Transverse colon (tissue), 4 donors: ENCODE measurements at regions of chr5 and their contacts with region 1.

Region 1: GRCh38 chr5:39015743-39016586 is 58.2 kb downstream of the RICTOR start:
- DNase-seq: no peak
- H3K4me3 ChIP-seq: no peak overlapping the region
- H3K27ac ChIP-seq: peak overlapping the region; percentile 49 to 73 (median 60)
- H3K4me1 ChIP-seq: peaks cover 7 to 36% (median 20%) of the 10 kb centered on the region in 4 donors
- H3K27me3 ChIP-seq: no peaks in the 10 kb centered on the region
- CTCF ChIP-seq: no peak
- EP300 ChIP-seq: no peak
- POLR2A ChIP-seq: no peak

Region 2: DNA sequence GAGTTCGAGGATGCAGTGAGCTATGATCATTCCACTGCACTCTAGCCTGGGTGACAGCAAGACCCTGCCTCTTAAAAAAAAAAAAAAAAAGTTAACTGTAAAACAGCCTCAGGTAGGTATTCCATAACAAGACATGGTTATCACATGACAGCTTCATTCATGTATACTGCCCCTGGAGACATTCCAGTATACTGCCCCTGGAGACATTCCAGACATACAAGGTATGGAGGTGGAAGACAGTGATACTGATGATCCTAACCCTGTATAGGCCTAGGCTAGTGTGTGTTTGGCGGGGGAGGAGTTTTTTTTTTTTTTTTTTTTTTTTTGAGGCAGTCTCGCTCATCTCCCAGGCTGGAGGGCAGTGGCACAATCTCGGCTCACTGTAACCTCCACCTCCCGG is 47.3 kb before region 1 on chr5:
- in situ Hi-C with region 1: no loop called
- intact Hi-C with region 1: no loop called
- DNase-seq: no peak
- H3K4me3 ChIP-seq: no peak overlapping the region
- H3K27ac ChIP-seq: no peak overlapping the region
- H3K4me1 ChIP-seq: no peaks in the 10 kb centered on the region
- H3K27me3 ChIP-seq: no peaks in the 10 kb centered on the region
- CTCF ChIP-seq: no peak
- EP300 ChIP-seq: no peak
- POLR2A ChIP-seq: no peak

Region 3: DNA sequence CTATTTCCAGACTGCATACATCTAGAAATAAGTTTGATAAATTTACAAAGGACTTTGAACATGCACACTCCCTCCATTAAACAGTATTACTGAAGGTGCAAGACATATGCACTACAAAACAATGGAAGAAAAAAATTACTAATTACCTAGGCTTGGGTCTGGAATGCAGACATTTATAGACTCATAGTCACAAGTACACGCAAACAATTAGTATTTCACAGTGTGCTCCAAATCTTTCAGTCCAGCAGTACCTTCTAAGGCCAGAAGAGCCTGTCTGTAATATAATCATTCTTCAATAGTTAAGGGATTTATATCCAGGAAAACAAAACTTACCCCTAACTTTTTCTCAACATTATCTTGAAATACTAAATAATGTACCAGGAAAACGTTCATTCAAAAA is 47.1 kb after region 1 on chr5:
- in situ Hi-C with region 1: no loop called
- intact Hi-C with region 1: loop called (anchors 10 kb)
- DNase-seq: no peak
- H3K4me3 ChIP-seq: no peak overlapping the region
- H3K27ac ChIP-seq: no peak overlapping the region
- H3K4me1 ChIP-seq: peaks cover 13 to 56% (median 28%) of the 10 kb centered on the region in 4 donors
- H3K27me3 ChIP-seq: no peaks in the 10 kb centered on the region
- CTCF ChIP-seq: no peak
- EP300 ChIP-seq: no peak
- POLR2A ChIP-seq: no peak